IMR-90 (cell line): ENCODE measurements at regions of chr10 and their contacts with region 1.

Region 1: GRCh38 chr10:103168486-103169311 is 24.4 kb downstream of the NT5C2 start:
- DNase-seq: peak; percentile 78
- ATAC-seq: peak; percentile 89
- H3K4me3 ChIP-seq: no peak overlapping the region
- H3K27ac ChIP-seq: no peak overlapping the region
- H3K4me1 ChIP-seq: no peaks in the 10 kb centered on the region
- H3K27me3 ChIP-seq: no peaks in the 10 kb centered on the region
- CTCF ChIP-seq: no peak
- POLR2A ChIP-seq: no peak
- RAD21 ChIP-seq: no peak

Region 2: DNA sequence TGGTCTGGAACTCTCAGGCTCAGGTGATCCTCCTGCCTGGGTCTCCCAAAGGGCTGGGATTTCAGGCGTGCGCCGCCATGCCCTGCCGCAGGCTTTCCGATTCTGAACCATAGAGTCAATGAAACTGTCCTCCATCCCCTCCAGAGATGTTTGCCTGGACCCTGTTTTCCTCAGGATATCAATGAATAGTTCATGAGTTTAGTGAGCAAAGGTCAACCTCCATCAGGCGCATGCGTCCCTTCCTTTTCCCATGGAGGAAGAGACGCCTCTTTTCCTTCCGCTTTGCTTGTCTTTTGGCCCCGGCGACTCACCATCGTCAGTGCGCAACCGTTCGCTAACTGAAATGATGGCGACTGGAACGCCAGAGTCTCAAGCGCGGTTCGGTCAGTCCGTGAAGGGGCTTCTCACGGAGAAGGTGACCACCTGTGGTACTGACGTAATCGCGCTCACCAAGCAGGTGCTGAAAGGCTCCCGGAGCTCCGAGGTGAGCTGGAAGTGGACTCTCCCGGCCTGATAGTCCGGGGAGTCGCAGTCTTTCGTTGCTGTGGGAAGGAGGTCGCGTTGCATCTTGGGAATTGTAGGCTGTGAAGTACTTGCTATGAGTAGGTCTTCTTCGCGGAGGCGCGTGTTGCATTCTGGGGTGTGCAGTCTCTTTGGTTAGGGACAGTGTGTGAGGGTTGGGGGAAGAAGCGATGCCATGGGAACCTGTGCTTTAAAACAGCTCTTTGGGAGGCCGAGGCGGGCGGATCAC is 314.6 kb before region 1 on chr10 and contains the start of gene BORCS7:
- CTCF ChIA-PET with region 1: no interaction called
- POLR2A ChIA-PET with region 1: interaction called, 13 read pairs
- dilution Hi-C with region 1: no loop called
- in situ Hi-C with region 1: no loop called
- intact Hi-C with region 1: no loop called
- DNase-seq: peak; percentile 97
- ATAC-seq: peak; percentile 98
- H3K4me3 ChIP-seq: peak within 1 kb of the TSS; percentile 79
- H3K27ac ChIP-seq: peak within 1 kb of the TSS; percentile 98
- H3K4me1 ChIP-seq: no peaks in the 10 kb centered on the region
- H3K27me3 ChIP-seq: no peaks in the 10 kb centered on the region
- CTCF ChIP-seq: no peak
- POLR2A ChIP-seq: peak; percentile 86
- RAD21 ChIP-seq: no peak
- total RNA-seq, gene BORCS7: 8.8 and 20.3 TPM in 2 replicates

Region 3: GRCh38 chr10:102951316-102951715 is 217.4 kb before region 1 on chr10:
- CTCF ChIA-PET with region 1: no interaction called
- POLR2A ChIA-PET with region 1: no interaction called
- dilution Hi-C with region 1: no loop called
- in situ Hi-C with region 1: no loop called
- intact Hi-C with region 1: no loop called
- DNase-seq: peak; percentile 56
- ATAC-seq: no peak; the same call in 1 of the 2 replicates
- H3K4me3 ChIP-seq: no peak overlapping the region
- H3K27ac ChIP-seq: no peak overlapping the region
- H3K4me1 ChIP-seq: no peaks in the 10 kb centered on the region; the same call in 1 of the 2 replicates
- H3K27me3 ChIP-seq: no peaks in the 10 kb centered on the region
- CTCF ChIP-seq: no peak
- POLR2A ChIP-seq: no peak
- RAD21 ChIP-seq: no peak

Region 4: DNA sequence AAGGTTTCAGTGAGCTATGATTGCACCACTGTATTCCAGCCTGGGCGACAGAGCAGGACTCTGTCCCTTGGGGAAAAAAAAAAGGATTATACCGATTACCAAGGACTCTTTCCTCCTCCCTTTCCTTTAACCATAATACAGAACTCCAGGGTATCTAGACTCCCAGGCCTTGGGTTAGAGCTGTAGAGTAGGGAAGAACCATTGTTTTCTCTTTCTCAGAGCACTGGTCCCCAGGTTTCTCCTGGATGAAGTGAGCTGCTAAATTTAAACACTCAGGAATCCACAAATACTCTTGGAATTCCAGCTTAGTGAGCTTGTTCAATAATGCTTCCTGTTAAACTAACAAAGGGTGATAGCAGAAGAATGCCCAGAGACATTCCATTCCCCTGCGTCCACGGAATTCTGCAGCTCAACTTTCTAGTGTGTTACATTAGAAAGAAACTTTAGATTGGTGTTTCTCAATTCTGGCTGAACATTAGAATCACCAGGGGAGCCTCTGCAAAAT is 62.4 kb after region 1 on chr10:
- CTCF ChIA-PET with region 1: no interaction called
- POLR2A ChIA-PET with region 1: interaction called, 13 read pairs
- dilution Hi-C with region 1: no loop called
- in situ Hi-C with region 1: no loop called
- intact Hi-C with region 1: no loop called
- DNase-seq: peak; percentile 97
- ATAC-seq: peak; percentile 83
- H3K4me3 ChIP-seq: no peak overlapping the region
- H3K27ac ChIP-seq: peak overlapping the region; percentile 93
- H3K4me1 ChIP-seq: peaks cover 19% of the 10 kb centered on the region
- H3K27me3 ChIP-seq: no peaks in the 10 kb centered on the region
- CTCF ChIP-seq: no peak
- POLR2A ChIP-seq: no peak
- RAD21 ChIP-seq: 0 out of 2 replicates have a peak, but pooled peaks have one; percentile 11